ENCODE measurements at regions of chr19 and their contacts with region 1.

Region 1: GRCh38 chr19:12881172-12881808 is at the start of gene DNASE2:
- DNase-seq: peak; percentile 96
- ATAC-seq: peak; percentile 83
- H3K4me3 Mint-ChIP-seq: peak within 1 kb of the TSS; percentile 87
- H3K27ac Mint-ChIP-seq: peak within 1 kb of the TSS; percentile 87
- H3K4me1 Mint-ChIP-seq: peaks cover 38% of the 10 kb centered on the region
- H3K27me3 Mint-ChIP-seq: no peaks in the 10 kb centered on the region
- total RNA-seq, gene DNASE2: 32.5 to 34.1 TPM

Region 2: GRCh38 chr19:12858041-12858928 is 23.0 kb before region 1 on chr19:
- CTCF ChIA-PET with region 1: no interaction called
- DNase-seq: no peak
- ATAC-seq: no peak
- H3K4me3 Mint-ChIP-seq: no peak overlapping the region
- H3K27ac Mint-ChIP-seq: no peak overlapping the region
- H3K4me1 Mint-ChIP-seq: no peaks in the 10 kb centered on the region
- H3K27me3 Mint-ChIP-seq: peaks cover 2% of the 10 kb centered on the region

Region 3: DNA sequence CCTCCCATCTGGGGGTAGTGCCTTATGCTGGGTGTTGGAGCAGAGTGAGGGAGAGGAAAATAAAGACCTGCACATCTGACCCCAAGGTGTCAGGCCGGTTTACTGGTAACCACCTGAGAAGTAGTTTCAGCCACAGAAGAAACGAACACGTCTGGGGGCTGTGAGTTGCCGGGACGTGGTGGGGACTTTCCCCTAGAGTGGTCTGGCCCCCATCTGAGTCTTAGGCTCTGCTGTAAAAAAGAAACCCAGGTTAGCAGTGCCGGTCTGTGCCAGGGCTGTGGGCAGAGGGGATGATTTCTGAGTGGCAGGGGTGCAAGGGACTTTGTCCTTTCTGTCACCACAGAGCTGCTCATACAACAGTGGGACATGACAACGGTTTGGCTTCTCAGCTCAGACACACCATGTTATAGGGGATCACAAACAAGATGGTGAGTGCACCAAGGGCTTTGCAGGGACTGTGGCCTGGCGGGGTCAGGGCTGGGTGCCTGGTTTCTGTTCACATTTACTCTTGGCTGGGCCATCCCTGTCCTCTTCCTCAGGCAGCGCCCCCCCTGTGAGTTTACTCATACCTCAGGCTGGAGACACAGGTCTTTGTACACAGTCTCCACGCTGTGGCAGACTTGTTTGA is 18.7 kb after region 1 on chr19:
- CTCF ChIA-PET with region 1: interaction called, 27 read pairs
- DNase-seq: peak; percentile 82
- ATAC-seq: peak; percentile 85
- H3K4me3 Mint-ChIP-seq: peak overlapping the region; percentile 56
- H3K27ac Mint-ChIP-seq: peak overlapping the region; percentile 88
- H3K4me1 Mint-ChIP-seq: peaks cover 26% of the 10 kb centered on the region
- H3K27me3 Mint-ChIP-seq: no peaks in the 10 kb centered on the region

Region 4: GRCh38 chr19:12913011-12913561 is 31.8 kb after region 1 on chr19:
- CTCF ChIA-PET with region 1: interaction called, 14 read pairs
- DNase-seq: no peak
- ATAC-seq: no peak
- H3K4me3 Mint-ChIP-seq: no peak overlapping the region
- H3K27ac Mint-ChIP-seq: peak overlapping the region; percentile 88
- H3K4me1 Mint-ChIP-seq: peaks cover 35% of the 10 kb centered on the region
- H3K27me3 Mint-ChIP-seq: no peaks in the 10 kb centered on the region

Region 5: DNA sequence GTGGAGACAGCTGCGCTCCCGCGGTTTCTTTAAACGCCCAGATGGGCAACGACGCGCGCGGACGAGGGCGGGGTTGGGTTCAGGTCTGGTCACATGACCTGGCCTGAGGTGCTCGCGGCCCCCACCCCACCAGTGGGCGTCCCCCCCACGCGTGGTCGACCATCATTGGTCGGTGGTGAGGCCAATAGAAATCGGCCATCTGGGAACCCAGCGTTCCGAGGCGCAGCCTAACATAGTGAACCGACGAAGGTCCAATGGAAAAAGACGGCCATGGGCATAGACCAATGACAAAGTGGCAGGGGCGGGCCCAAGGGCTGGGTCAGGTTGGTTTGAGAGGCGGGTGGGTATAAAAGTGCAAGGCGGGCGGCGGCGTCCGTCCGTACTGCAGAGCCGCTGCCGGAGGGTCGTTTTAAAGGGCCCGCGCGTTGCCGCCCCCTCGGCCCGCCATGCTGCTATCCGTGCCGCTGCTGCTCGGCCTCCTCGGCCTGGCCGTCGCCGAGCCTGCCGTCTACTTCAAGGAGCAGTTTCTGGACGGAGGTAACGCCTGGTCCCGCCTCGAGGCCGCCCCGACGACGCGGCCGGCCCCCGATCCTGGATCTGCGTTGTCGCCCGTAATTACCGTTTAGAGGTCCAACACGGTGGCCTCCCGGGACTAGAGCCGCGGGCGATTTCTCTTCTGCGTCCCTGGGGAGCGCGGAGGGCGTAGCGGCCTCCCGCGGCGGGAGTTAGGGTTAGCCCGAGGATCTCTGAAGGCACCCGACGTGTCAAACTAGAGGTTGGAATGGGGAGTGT is 57.1 kb after region 1 on chr19 and contains the start of gene CALR:
- CTCF ChIA-PET with region 1: interaction called, 23 read pairs
- DNase-seq: peak; percentile 100
- ATAC-seq: peak; percentile 92
- H3K4me3 Mint-ChIP-seq: peak within 1 kb of the TSS; percentile 100
- H3K27ac Mint-ChIP-seq: peak within 1 kb of the TSS; percentile 95
- H3K4me1 Mint-ChIP-seq: peaks cover 65% of the 10 kb centered on the region
- H3K27me3 Mint-ChIP-seq: no peaks in the 10 kb centered on the region
- total RNA-seq, gene CALR: 745 to 898 TPM